Heart left ventricle (tissue), 16 donors: ENCODE measurements at regions of chr2 and their contacts with region 1.

Region 1: DNA sequence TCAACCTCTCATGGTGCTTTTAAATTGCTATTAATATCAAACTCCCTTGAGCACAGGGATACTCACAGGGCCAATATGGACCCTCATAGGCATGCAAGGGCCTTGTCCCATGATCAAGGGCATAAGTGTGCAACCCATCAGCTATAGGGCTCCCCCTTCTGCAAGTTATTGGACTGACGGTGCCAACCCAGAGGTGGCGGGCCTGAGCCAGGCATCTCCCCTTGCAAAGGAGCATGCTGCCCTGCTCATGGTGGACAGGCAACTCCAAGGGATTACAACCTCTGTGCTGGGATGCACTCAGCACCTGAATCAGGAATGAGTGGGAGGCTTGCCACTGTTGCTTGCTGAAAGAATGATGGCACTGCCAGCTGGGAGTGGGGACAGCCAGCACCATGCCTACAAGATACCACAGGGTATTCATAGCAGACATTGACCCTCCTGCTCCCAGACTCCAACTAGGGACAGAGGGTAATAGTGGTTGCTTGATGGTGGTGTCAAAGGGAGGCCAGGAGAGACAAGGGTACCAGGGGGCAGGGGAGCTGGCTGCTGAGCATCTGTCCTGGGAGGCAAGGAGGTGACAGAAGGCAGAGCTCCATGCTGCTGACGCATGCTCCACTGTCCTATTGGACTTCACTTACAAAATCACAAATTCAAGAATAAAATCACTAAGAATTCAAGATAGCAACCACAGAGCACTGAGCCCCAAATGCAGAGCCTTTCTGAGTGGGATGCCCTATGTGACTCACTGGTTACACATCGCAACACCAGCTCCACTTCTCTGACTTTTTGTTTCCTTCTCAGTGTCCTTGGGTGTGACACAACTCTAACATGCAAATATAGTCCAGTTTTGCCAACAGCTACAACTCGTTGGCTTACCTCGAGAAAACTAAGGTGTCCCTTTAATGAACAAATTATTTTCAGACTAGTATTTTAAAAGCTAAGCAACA is 157.1 kb upstream of the CCDC150 start:
- DNase-seq: peak in 2 of 5 donors; percentile 29 to 50
- ATAC-seq: peak in 3 of 4 donors; percentile 29 to 33 (median 32)
- H3K4me3 ChIP-seq: no peak overlapping the region
- H3K27ac ChIP-seq: no peak overlapping the region
- H3K4me1 ChIP-seq: peaks cover 0 to 49% (median 3%) of the 10 kb centered on the region in 12 donors
- H3K27me3 ChIP-seq: no peaks in the 10 kb centered on the region
- CTCF ChIP-seq: no peak
- POLR2A ChIP-seq: no peak

Region 2: GRCh38 chr2:196535742-196536141 is 53.4 kb after region 1 on chr2:
- intact Hi-C with region 1: loop called in 1 of 10 experiments (anchors 5 kb)
- DNase-seq: no peak
- ATAC-seq: no peak
- H3K4me3 ChIP-seq: no peak overlapping the region
- H3K27ac ChIP-seq: peak overlapping the region in 1 of 12 donors; percentile 72
- H3K4me1 ChIP-seq: peaks cover 0 to 35% (median 0%) of the 10 kb centered on the region in 12 donors
- H3K27me3 ChIP-seq: no peaks in the 10 kb centered on the region
- CTCF ChIP-seq: no peak
- POLR2A ChIP-seq: no peak

Region 3: GRCh38 chr2:196586511-196586991 is 104.2 kb after region 1 on chr2:
- intact Hi-C with region 1: loop called in 5 of 10 experiments (anchors 5 to 10 kb)
- DNase-seq: no peak
- ATAC-seq: peak in 1 of 4 donors; percentile 33
- H3K4me3 ChIP-seq: no peak overlapping the region
- H3K27ac ChIP-seq: peak overlapping the region in 2 of 12 donors; percentile 13 to 36
- H3K4me1 ChIP-seq: peaks cover 0 to 12% (median 0%) of the 10 kb centered on the region in 12 donors
- H3K27me3 ChIP-seq: peaks cover 0 to 23% (median 0%) of the 10 kb centered on the region in 9 donors
- CTCF ChIP-seq: no peak
- POLR2A ChIP-seq: no peak